GM23248 (cell line): ENCODE measurements at regions of chr2 and their contacts with region 1.

Region 1: GRCh38 chr2:134897932-134898331 is 20.7 kb upstream of the CCNT2 start:
- DNase-seq: peak; percentile 46
- H3K4me3 ChIP-seq: no peak overlapping the region
- H3K27ac ChIP-seq: no peak overlapping the region
- H3K4me1 ChIP-seq: no peaks in the 10 kb centered on the region
- H3K27me3 ChIP-seq: no peaks in the 10 kb centered on the region

Region 2: DNA sequence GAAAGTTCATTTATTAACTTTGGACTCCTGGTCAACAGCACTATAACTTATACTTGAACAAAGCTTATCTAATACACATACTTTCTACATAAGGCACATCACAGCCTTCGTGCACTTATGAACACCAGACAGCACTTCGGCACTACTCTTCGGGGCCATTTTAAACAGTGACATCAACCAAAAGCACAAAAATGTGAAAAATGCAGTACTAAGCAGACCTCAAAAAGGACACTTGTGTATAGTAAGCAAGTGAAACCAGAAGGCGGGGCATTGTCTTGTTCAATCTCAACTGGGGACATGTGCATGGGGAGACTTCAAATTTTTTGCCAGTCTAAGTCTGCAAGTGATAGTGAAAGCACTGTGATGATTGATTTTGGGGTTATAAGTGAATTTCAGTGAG is 1492.7 kb before region 1 on chr2:
- in situ Hi-C with region 1: no loop called
- DNase-seq: no peak
- H3K4me3 ChIP-seq: no peak overlapping the region
- H3K27ac ChIP-seq: no peak overlapping the region
- H3K4me1 ChIP-seq: no peaks in the 10 kb centered on the region
- H3K27me3 ChIP-seq: no peaks in the 10 kb centered on the region

Region 3: GRCh38 chr2:133919285-133919684 is 978.6 kb before region 1 on chr2:
- in situ Hi-C with region 1: loop called (anchors 25 kb)
- DNase-seq: no peak
- H3K4me3 ChIP-seq: no peak overlapping the region
- H3K27ac ChIP-seq: no peak overlapping the region
- H3K4me1 ChIP-seq: no peaks in the 10 kb centered on the region
- H3K27me3 ChIP-seq: no peaks in the 10 kb centered on the region

Region 4: GRCh38 chr2:134198006-134198634 is 699.8 kb before region 1 on chr2:
- in situ Hi-C with region 1: no loop called
- DNase-seq: no peak
- H3K4me3 ChIP-seq: no peak overlapping the region
- H3K27ac ChIP-seq: no peak overlapping the region
- H3K4me1 ChIP-seq: peaks cover 9% of the 10 kb centered on the region; the same call in 1 of the 2 replicates
- H3K27me3 ChIP-seq: no peaks in the 10 kb centered on the region

Region 5: DNA sequence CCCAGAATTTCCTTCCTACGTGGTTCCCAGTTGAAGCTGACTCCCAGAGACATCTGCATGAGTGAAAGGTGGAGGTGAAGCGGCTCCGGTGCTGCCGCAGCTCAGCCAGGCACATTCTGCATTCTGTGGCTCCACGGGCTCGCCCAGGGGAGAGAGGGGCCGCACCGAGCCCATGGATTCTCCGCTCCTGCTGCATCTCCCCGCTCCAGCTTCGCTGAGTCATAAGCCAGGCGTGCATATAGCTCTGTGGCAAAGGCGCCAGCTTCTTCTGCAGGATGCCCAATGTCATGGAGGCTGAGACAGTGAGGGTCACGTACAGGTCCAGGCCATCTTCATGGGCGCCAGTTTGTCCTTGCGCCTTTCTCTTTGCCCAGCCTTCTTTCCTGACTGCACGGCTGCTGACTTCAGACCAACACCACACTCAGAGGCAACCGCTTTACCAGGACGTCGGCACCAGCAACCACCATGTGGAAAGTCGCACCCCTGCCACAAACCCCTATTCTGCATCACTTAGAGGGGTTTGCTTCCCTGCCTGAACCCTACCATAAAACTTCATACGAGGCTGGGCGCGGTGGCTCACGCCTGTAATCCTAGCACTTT is 428.3 kb before region 1 on chr2:
- in situ Hi-C with region 1: loop called (anchors 10 kb)
- DNase-seq: no peak
- H3K4me3 ChIP-seq: no peak overlapping the region
- H3K27ac ChIP-seq: no peak overlapping the region
- H3K4me1 ChIP-seq: no peaks in the 10 kb centered on the region
- H3K27me3 ChIP-seq: peaks cover 16% of the 10 kb centered on the region; the same call in 1 of the 2 replicates

Region 6: GRCh38 chr2:135451966-135452365 is 554.0 kb after region 1 on chr2:
- in situ Hi-C with region 1: no loop called
- DNase-seq: no peak
- H3K4me3 ChIP-seq: no peak overlapping the region
- H3K27ac ChIP-seq: no peak overlapping the region
- H3K4me1 ChIP-seq: no peaks in the 10 kb centered on the region
- H3K27me3 ChIP-seq: no peaks in the 10 kb centered on the region